Activated naive CD4-positive, alpha-beta T cell treated with anti-CD3 and anti-CD28 coated beads, Interleukin-2, amount 10 ng/mL, durations not matched to agents 7 days and 5 days (primary cell): ENCODE measurements at regions of chr12 and their contacts with region 1.

Region 1: GRCh38 chr12:47397664-47398281 is 308.1 kb downstream of the RPAP3 start:
- DNase-seq: peak; percentile 61
- H3K4me3 Mint-ChIP-seq: no peak overlapping the region
- H3K27ac Mint-ChIP-seq: peak overlapping the region; percentile 84
- H3K4me1 Mint-ChIP-seq: peaks cover 75% of the 10 kb centered on the region
- H3K27me3 Mint-ChIP-seq: no peaks in the 10 kb centered on the region

Region 2: GRCh38 chr12:47071241-47071852 is 326.4 kb before region 1 on chr12:
- CTCF ChIA-PET with region 1: interaction called, 26 read pairs
- DNase-seq: no peak
- H3K4me3 Mint-ChIP-seq: no peak overlapping the region
- H3K27ac Mint-ChIP-seq: no peak overlapping the region
- H3K4me1 Mint-ChIP-seq: peaks cover under 1% of the 10 kb centered on the region
- H3K27me3 Mint-ChIP-seq: no peaks in the 10 kb centered on the region

Region 3: GRCh38 chr12:47207340-47207717 is 190.4 kb before region 1 on chr12:
- CTCF ChIA-PET with region 1: interaction called, 19 read pairs
- DNase-seq: peak; percentile 73
- H3K4me3 Mint-ChIP-seq: peak overlapping the region; percentile 81
- H3K27ac Mint-ChIP-seq: peak overlapping the region; percentile 79
- H3K4me1 Mint-ChIP-seq: peaks cover 81% of the 10 kb centered on the region
- H3K27me3 Mint-ChIP-seq: no peaks in the 10 kb centered on the region

Region 4: GRCh38 chr12:47356129-47356700 is 41.6 kb before region 1 on chr12:
- CTCF ChIA-PET with region 1: interaction called, 20 read pairs
- DNase-seq: no peak
- H3K4me3 Mint-ChIP-seq: peak overlapping the region; percentile 31
- H3K27ac Mint-ChIP-seq: peak overlapping the region; percentile 85
- H3K4me1 Mint-ChIP-seq: peaks cover 73% of the 10 kb centered on the region
- H3K27me3 Mint-ChIP-seq: no peaks in the 10 kb centered on the region

Region 5: DNA sequence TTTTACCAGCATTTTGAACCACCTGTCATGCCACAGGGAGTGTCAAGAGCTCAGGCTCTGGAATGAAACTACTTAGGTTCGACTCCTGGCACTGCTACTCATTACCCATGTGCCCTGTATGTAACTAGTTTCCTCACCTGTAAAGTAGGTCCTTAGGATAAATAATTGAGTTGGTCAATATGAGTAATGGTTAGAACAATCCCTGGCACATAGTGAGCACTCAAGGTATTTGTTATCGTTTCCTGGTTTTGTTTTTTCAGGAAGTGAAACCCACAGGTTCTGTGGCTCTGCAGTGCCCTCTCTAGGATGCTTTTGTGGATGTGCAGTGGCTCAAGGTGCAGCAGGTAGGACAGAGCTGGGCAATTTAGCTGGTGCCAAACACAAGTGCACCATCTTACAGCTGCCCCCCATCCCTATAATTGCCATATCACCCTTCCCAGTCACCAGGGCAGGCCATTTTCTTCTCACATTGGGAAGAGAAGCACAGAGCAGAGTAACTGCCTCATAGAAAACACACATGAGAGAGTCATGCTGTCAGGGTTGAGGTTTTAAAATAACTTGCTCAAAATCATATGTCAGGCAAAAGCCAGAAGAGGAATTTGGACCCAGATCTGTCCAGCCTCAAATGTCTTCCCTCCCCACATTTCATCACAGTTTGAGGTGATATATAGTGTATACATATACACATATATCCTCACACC is 10.5 kb after region 1 on chr12:
- CTCF ChIA-PET with region 1: interaction called, 19 read pairs
- DNase-seq: peak; percentile 68
- H3K4me3 Mint-ChIP-seq: no peak overlapping the region
- H3K27ac Mint-ChIP-seq: peak overlapping the region; percentile 73
- H3K4me1 Mint-ChIP-seq: peaks cover 55% of the 10 kb centered on the region
- H3K27me3 Mint-ChIP-seq: peaks cover 4% of the 10 kb centered on the region